ENCODE measurements at regions of chr2 and their contacts with region 1.

Region 1: GRCh38 chr2:211157856-211158463 is 601.6 kb downstream of the CPS1 start:
- DNase-seq: peak; percentile 52 to 64
- ATAC-seq: peak in 4 of 8 donors; percentile 52 to 73 (median 62)
- H3K4me3 ChIP-seq: no peak overlapping the region
- H3K27ac ChIP-seq: no peak overlapping the region
- H3K4me1 ChIP-seq: no peaks in the 10 kb centered on the region
- H3K27me3 ChIP-seq: peaks cover 0 to 3% (median 0%) of the 10 kb centered on the region in 7 donors
- CTCF ChIP-seq: peak; percentile 50 to 89 (median 81)

Region 2: DNA sequence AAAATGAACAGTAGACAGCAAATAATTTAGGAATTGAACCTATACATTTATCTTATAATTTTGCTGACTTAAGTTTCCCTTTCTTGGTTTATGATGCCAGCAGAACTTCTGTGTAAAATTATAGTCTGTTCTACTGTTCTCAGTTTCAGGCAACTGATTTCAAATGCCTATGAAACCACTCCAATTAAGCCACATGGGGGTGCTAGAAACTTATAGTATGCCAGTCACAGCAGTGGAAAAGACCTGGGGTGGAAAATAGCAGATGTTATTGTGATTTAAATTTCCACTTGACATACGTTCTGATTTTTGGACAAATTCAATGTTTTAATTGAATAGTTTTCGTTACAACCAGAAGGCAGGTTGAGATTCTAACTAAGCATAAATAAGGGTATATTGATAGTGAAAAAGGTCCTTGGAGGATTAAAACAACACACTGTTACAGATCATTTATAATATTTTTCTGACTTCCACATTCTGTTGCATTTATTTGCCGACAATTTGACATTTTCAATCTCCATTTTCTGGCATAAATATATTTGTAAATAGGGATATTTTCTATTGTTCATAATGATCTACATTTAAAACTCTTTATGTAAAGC is 540.1 kb before region 1 on chr2:
- intact Hi-C with region 1: loop called in 3 of 10 experiments (anchors 5 to 10 kb)
- DNase-seq: peak in 1 of 2 donors; percentile 6
- ATAC-seq: no peak
- H3K4me3 ChIP-seq: no peak overlapping the region
- H3K27ac ChIP-seq: no peak overlapping the region
- H3K4me1 ChIP-seq: no peaks in the 10 kb centered on the region
- H3K27me3 ChIP-seq: no peaks in the 10 kb centered on the region
- CTCF ChIP-seq: peak in 7 of 9 donors; percentile 35 to 67 (median 57)

Region 3: GRCh38 chr2:210663631-210664089 is 494.3 kb before region 1 on chr2:
- intact Hi-C with region 1: loop called in 2 of 10 experiments (anchors 5 kb)
- DNase-seq: peak in 1 of 2 donors; percentile 5
- ATAC-seq: peak in 2 of 8 donors; percentile 30 to 73
- H3K4me3 ChIP-seq: no peak overlapping the region
- H3K27ac ChIP-seq: no peak overlapping the region
- H3K4me1 ChIP-seq: no peaks in the 10 kb centered on the region
- H3K27me3 ChIP-seq: no peaks in the 10 kb centered on the region
- CTCF ChIP-seq: peak in 7 of 9 donors; percentile 29 to 63 (median 42)

Region 4: DNA sequence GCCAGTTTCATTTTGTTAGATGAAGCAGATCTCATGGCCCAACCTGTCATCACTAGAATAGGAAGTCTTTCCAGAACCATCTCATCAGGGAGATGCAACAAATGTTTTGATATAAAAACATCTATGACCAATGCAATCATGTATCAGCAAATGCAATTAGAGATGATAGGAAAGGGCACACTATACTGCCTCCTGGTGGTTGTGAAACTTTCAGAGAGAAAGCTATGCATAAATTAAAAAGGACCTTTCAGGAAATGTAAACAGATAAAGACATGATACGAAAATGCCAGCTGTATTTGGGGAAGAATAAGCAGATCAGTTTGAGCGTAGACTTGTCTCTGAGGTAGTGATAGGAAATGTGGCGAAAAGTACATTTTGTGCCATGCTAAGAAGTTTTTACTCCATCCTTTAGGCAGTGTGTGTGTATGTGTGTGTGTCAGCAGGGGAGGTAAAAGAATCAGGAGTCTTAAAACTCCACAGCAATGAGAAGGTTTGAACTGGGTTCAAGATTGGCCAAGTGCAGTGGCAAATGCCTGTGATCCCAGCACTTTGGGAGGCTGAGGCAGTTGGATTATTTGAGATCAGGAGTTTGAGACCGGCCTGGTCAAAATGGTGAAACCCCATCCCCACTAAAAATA is 122.3 kb before region 1 on chr2:
- intact Hi-C with region 1: loop called in 1 of 10 experiments (anchors 5 kb)
- DNase-seq: peak in 1 of 2 donors; percentile 5
- ATAC-seq: no peak
- H3K4me3 ChIP-seq: no peak overlapping the region
- H3K27ac ChIP-seq: no peak overlapping the region
- H3K4me1 ChIP-seq: no peaks in the 10 kb centered on the region
- H3K27me3 ChIP-seq: no peaks in the 10 kb centered on the region
- CTCF ChIP-seq: peak in 7 of 9 donors; percentile 40 to 68 (median 55)

Region 5: GRCh38 chr2:211093743-211094303 is 64.1 kb before region 1 on chr2:
- intact Hi-C with region 1: no loop called
- DNase-seq: no peak
- ATAC-seq: no peak
- H3K4me3 ChIP-seq: no peak overlapping the region
- H3K27ac ChIP-seq: no peak overlapping the region
- H3K4me1 ChIP-seq: no peaks in the 10 kb centered on the region
- H3K27me3 ChIP-seq: no peaks in the 10 kb centered on the region
- CTCF ChIP-seq: peak in 4 of 9 donors; percentile 17 to 38 (median 20)

Region 6: GRCh38 chr2:211512806-211513205 is 354.8 kb after region 1 on chr2:
- intact Hi-C with region 1: no loop called
- DNase-seq: no peak
- ATAC-seq: no peak
- H3K4me3 ChIP-seq: no peak overlapping the region
- H3K27ac ChIP-seq: no peak overlapping the region
- H3K4me1 ChIP-seq: no peaks in the 10 kb centered on the region
- H3K27me3 ChIP-seq: no peaks in the 10 kb centered on the region
- CTCF ChIP-seq: no peak

Region 7: GRCh38 chr2:211591426-211591825 is 433.5 kb after region 1 on chr2:
- intact Hi-C with region 1: no loop called
- DNase-seq: no peak
- ATAC-seq: no peak
- H3K4me3 ChIP-seq: no peak overlapping the region
- H3K27ac ChIP-seq: no peak overlapping the region
- H3K4me1 ChIP-seq: no peaks in the 10 kb centered on the region
- H3K27me3 ChIP-seq: no peaks in the 10 kb centered on the region
- CTCF ChIP-seq: no peak

Measured in heart right ventricle (tissue), 16 donors.